Activated CD4-positive, alpha-beta T cell treated with anti-CD3 and anti-CD28 coated beads for 36 hours (primary cell): ENCODE measurements at regions of chr6 and their contacts with region 1.

Region 1: GRCh38 chr6:102944475-102944874 is 1551.0 kb downstream of the GRIK2 start:
- DNase-seq: no peak
- ATAC-seq: no peak
- H3K4me3 Mint-ChIP-seq: no peak overlapping the region
- H3K27ac Mint-ChIP-seq: no peak overlapping the region
- H3K4me1 Mint-ChIP-seq: no peaks in the 10 kb centered on the region
- H3K27me3 Mint-ChIP-seq: no peaks in the 10 kb centered on the region

Region 2: DNA sequence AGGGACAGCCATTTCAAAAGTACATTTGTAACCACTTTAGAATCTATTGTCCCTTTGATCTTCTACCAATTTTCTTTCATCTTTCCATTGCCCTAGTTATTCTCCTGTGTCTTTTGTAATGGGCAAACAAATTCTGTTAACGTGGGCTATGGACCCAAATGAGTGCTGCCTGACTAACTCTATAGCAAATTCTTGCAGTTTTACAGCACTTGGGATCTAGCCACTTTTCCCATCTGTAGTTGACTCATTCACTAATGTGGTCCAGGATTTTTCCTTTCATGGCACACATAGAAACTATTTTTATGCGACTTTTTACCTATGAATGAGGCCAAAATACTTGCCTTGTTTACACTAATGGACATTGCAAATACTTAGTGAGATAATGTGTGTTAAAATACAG is 1498.9 kb before region 1 on chr6:
- CTCF ChIA-PET with region 1: no interaction called
- POLR2A ChIA-PET with region 1: no interaction called
- intact Hi-C with region 1: loop called in 1 of 2 experiments (anchors 5 kb)
- DNase-seq: no peak
- ATAC-seq: no peak
- H3K4me3 Mint-ChIP-seq: no peak overlapping the region
- H3K27ac Mint-ChIP-seq: no peak overlapping the region
- H3K4me1 Mint-ChIP-seq: no peaks in the 10 kb centered on the region
- H3K27me3 Mint-ChIP-seq: no peaks in the 10 kb centered on the region